ENCODE measurements at regions of chr1 and their contacts with region 1.

Region 1: DNA sequence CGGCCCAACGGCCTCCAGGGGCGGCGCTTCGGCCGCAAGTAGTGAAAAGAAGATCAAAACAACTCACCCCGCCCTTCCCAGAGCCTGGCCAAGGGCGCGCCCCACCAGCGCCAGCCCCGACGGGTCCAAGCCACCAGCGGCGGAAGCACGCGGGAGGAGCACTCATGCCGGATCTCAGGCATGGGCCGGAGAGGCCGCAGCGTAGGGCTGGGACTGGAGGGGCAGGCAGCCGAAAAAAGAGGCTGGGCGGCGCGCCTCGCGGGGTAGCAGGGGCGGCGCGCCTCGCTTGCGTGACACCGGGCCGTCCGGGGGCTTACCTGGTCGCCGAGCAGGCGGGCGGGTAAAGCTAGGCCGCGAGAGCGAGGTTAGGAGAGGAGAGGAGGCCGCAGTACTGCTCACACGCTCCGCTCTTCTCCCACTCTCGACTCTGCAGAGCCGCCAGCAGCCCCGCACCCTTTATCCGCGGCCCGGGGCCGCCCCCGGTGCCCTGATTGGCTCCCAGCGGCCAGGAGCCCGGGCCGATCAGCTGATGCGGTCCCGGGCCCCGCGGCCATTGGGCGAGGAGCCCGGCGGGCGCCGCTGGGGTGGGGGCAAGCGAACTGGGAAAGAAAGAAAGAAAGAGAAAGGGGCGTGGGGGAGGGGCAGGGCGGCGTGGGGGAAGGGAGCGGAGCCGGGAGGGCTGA is at the start of gene GLUL:
- DNase-seq: peak; percentile 29
- H3K4me3 ChIP-seq: peak within 1 kb of the TSS; percentile 80
- CTCF ChIP-seq: no peak

Region 2: DNA sequence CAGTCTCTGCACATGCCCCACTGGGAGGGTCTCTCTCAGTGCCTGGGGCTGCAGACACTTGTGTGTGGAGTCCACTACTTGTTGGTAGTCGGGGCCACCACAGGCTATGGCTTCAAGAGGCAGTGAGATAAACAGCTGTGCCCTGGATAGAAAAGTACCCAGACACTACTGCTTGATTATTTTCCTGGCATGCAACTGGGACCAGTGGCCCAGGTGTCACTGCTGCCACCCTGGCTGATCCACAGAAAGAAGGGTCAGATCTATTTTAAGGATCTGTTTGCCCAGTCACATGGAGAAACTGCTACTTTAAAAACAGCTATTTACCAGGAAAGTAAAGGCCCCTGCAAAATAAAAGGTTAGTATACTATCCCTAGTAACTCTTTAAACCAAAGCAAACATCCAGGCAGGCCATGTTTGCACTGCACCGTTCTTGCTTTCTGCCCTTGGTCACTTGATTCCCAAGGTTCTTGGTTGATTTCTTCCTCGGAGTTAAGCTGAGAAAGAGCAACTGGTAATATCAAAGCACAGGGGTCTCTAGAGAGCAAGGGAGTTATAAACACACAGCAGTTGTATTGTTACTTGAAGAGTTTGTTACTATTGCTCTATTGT is 99.8 kb before region 1 on chr1:
- CTCF ChIA-PET with region 1: interaction called, 5 read pairs
- POLR2A ChIA-PET with region 1: interaction called, 12 read pairs
- DNase-seq: no peak
- H3K4me3 ChIP-seq: no peak overlapping the region
- CTCF ChIP-seq: no peak

Measured in AG04449 (cell line).